Activated CD4-positive, alpha-beta T cell treated with anti-CD3 and anti-CD28 coated beads for 36 hours (primary cell): ENCODE measurements at regions of chr6 and their contacts with region 1.

Region 1: DNA sequence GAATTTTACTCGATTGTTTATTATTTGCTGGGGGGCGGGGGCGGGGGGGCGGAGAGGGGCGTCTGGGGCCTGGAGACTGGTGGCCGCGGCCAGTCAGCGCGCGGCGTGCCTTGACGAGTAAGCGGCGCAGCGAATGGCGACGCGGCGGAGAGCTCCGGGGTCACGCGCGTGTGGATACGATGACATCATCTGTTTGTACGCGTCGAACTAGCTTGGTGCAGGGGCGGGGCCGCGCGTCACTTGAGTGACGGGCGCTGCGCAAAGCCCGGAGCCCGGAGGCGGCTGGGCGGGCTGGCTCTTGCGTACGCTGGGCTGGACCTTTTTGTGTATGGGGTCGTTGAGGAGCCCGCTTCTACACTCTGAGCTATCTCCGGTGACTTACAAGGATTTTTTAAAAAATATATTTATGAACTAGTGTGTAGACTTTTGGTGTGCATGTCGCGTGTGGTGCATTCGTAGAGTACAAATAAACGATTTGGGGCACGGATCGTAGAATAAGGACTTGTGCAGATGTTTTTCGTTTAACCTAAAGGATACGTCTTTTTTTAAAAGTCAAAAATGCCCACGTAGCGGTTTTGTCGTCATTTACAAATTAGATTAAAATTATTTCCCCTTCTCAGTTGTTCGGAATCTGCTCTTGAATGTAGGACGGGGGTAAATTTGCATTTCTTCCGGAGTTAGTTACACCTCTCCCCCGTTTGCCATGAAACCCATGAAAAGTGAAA is 2.2 kb upstream of the FOXO3 start:
- DNase-seq: peak; percentile 98
- ATAC-seq: peak; percentile 71
- H3K4me3 Mint-ChIP-seq: peak overlapping the region; percentile 83
- H3K27ac Mint-ChIP-seq: peak overlapping the region; percentile 89
- H3K4me1 Mint-ChIP-seq: peaks cover 21% of the 10 kb centered on the region
- H3K27me3 Mint-ChIP-seq: peaks cover 14% of the 10 kb centered on the region

Region 2: GRCh38 chr6:107820338-107821261 is 737.9 kb before region 1 on chr6:
- CTCF ChIA-PET with region 1: no interaction called
- POLR2A ChIA-PET with region 1: no interaction called
- intact Hi-C with region 1: loop called in 1 of 2 experiments (anchors 5 kb)
- DNase-seq: peak; percentile 60
- ATAC-seq: no peak
- H3K4me3 Mint-ChIP-seq: peak overlapping the region; percentile 87
- H3K27ac Mint-ChIP-seq: peak overlapping the region; percentile 98
- H3K4me1 Mint-ChIP-seq: peaks cover 84% of the 10 kb centered on the region
- H3K27me3 Mint-ChIP-seq: no peaks in the 10 kb centered on the region

Region 3: GRCh38 chr6:108268845-108269244 is 289.7 kb before region 1 on chr6:
- CTCF ChIA-PET with region 1: no interaction called
- POLR2A ChIA-PET with region 1: no interaction called
- intact Hi-C with region 1: no loop called
- DNase-seq: no peak
- ATAC-seq: no peak
- H3K4me3 Mint-ChIP-seq: no peak overlapping the region
- H3K27ac Mint-ChIP-seq: no peak overlapping the region
- H3K4me1 Mint-ChIP-seq: no peaks in the 10 kb centered on the region
- H3K27me3 Mint-ChIP-seq: no peaks in the 10 kb centered on the region

Region 4: DNA sequence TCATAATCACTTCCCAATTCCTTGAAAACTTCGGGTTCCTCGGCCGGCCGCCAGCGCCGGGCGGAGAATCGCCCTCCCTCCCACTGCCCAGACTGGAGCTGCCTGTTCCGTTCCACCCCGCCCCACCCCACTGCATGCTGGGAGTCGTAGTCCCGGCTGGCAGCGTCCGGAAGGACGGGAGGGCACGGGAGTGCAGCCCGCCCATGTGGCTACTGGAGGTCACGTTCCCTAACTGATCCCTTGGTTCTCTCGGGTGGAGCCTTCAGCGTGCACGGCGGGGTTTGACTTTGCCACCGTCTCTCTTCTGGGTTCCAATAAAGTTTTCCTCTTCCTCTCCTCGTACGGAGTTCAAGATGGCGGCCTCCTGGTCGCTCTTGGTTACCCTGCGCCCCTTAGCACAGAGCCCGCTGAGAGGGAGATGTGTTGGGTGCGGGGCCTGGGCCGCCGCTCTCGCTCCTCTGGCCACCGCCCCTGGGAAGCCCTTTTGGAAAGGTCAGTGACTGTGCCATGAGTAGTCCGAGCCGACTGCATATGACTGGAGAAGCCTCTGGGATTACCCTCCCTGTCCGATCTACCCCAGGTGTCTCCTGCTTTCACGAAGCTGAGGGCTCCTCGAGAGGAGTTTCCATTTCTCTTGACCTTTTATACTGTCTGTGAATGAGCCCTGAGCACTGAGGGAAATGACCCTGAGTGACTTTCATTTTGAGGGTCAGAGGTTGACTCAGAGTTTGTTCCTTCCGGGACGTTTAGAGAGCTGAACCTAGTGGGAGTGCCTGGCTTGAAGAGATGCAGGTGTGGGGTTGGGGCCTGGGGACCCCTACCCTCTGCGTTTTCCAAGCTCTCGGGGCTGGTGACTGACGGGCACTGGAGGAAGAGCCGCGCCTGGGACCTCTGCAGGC is 263.6 kb before region 1 on chr6 and contains the start of gene AFG1L:
- CTCF ChIA-PET with region 1: no interaction called
- POLR2A ChIA-PET with region 1: no interaction called
- intact Hi-C with region 1: loop called in 1 of 2 experiments (anchors 1 kb)
- DNase-seq: peak; percentile 93
- ATAC-seq: peak; percentile 92
- H3K4me3 Mint-ChIP-seq: peak within 1 kb of the TSS; percentile 99
- H3K27ac Mint-ChIP-seq: peak within 1 kb of the TSS; percentile 100
- H3K4me1 Mint-ChIP-seq: peaks cover 13% of the 10 kb centered on the region
- H3K27me3 Mint-ChIP-seq: no peaks in the 10 kb centered on the region
- total RNA-seq, gene AFG1L: 6.6 TPM

Region 5: GRCh38 chr6:108359901-108360882 is 198.3 kb before region 1 on chr6:
- CTCF ChIA-PET with region 1: no interaction called
- POLR2A ChIA-PET with region 1: no interaction called
- intact Hi-C with region 1: no loop called
- DNase-seq: no peak
- ATAC-seq: no peak
- H3K4me3 Mint-ChIP-seq: no peak overlapping the region
- H3K27ac Mint-ChIP-seq: no peak overlapping the region
- H3K4me1 Mint-ChIP-seq: no peaks in the 10 kb centered on the region
- H3K27me3 Mint-ChIP-seq: no peaks in the 10 kb centered on the region

Region 6: DNA sequence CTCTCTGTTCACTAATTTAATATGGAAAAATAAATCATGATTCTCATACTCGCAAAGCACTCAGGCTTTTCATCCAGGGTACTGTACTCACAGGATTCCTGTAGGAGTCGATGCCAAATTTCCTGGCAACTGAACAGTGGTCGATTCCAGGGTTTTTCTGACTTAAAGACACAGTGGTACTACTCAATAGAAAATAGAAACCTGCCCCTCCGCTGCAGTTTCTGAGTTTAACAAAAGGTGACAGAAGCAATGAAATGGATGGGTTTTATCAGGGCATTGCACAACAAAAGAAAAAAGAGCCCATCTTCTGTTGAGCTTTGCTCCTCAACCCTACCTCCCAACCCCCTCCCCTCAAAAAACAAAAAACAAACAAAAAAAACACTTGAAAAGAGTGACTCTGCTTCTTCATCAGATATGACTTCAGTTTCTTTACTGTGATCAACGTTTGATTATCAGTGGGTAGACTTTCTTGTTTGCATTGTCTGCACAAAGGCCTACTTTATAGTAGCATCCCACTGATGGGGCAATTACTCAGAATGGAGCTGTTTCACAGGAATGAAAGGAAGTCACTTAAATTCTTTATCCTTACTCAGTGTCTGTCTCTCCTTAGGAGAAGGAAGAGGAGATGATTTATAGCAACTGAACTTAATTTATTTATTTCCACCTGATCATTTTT is 94.0 kb before region 1 on chr6:
- CTCF ChIA-PET with region 1: no interaction called
- POLR2A ChIA-PET with region 1: no interaction called
- intact Hi-C with region 1: no loop called
- DNase-seq: no peak
- ATAC-seq: no peak
- H3K4me3 Mint-ChIP-seq: no peak overlapping the region
- H3K27ac Mint-ChIP-seq: no peak overlapping the region
- H3K4me1 Mint-ChIP-seq: no peaks in the 10 kb centered on the region
- H3K27me3 Mint-ChIP-seq: peaks cover 16% of the 10 kb centered on the region

Region 7: GRCh38 chr6:108667993-108668392 is 109.5 kb after region 1 on chr6:
- CTCF ChIA-PET with region 1: no interaction called
- POLR2A ChIA-PET with region 1: no interaction called
- intact Hi-C with region 1: loop called in 1 of 2 experiments (anchors 5 kb)
- DNase-seq: no peak
- ATAC-seq: no peak
- H3K4me3 Mint-ChIP-seq: no peak overlapping the region
- H3K27ac Mint-ChIP-seq: no peak overlapping the region
- H3K4me1 Mint-ChIP-seq: peaks cover 45% of the 10 kb centered on the region
- H3K27me3 Mint-ChIP-seq: no peaks in the 10 kb centered on the region

Region 8: DNA sequence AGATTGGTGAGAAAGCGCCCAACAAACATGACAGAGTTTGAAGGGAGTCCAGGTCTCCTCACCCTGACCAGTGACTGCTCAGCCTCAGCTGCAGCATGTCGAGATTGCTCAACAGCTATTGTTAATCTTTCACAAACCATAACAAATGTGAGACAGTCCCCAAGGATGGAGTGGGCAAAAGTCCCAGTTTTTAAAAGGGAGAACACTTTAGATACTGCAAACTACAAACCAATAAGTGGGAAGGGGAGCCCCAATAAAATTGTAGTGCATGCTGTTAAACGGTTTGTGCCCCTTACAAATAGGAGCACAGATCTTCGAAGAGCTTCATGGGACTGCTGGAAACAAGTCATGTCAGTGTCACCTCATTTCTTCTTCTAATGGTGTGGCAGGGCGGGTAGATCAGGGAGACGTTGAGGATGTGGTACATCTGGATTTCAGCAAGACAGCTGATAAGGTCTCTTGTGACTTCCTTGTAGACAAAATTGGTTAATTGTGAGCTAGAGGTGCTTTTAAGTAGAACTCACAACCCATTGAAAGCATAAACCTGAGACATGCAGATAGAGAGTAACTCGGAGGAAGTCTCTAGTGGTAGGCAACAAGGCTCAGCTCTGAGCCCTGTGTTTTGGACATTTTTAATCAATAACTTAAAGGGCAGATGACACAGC is 155.7 kb after region 1 on chr6:
- CTCF ChIA-PET with region 1: no interaction called
- POLR2A ChIA-PET with region 1: no interaction called
- intact Hi-C with region 1: no loop called
- DNase-seq: no peak
- ATAC-seq: no peak
- H3K4me3 Mint-ChIP-seq: no peak overlapping the region
- H3K27ac Mint-ChIP-seq: no peak overlapping the region
- H3K4me1 Mint-ChIP-seq: peaks cover 10% of the 10 kb centered on the region
- H3K27me3 Mint-ChIP-seq: no peaks in the 10 kb centered on the region

Region 9: DNA sequence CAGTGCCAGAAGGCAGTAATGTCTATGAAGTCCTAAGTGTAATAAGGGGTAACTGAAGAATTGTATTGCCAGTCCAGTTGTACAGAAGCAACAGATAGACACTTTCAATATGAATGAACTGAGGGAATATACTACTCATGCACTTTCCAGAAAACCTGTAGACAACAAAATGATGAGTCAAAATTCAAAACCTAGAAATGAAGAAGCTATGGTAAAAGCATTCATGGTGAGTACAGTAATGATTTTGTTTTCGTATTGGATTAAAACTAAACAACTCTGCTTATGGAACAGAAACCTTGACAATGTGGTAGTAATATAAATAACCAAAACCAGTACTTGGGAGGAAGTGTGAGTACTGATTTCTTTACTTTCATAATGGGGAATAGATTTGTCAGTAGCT is 324.6 kb after region 1 on chr6:
- CTCF ChIA-PET with region 1: no interaction called
- POLR2A ChIA-PET with region 1: interaction called, 3 read pairs
- intact Hi-C with region 1: loop called in 1 of 2 experiments (anchors 1 kb)
- DNase-seq: no peak
- ATAC-seq: peak; percentile 93
- H3K4me3 Mint-ChIP-seq: no peak overlapping the region
- H3K27ac Mint-ChIP-seq: peak overlapping the region; percentile 60
- H3K4me1 Mint-ChIP-seq: peaks cover 34% of the 10 kb centered on the region
- H3K27me3 Mint-ChIP-seq: peaks cover 16% of the 10 kb centered on the region

Region 10: GRCh38 chr6:109308018-109308492 is 749.5 kb after region 1 on chr6:
- CTCF ChIA-PET with region 1: no interaction called
- POLR2A ChIA-PET with region 1: no interaction called
- intact Hi-C with region 1: loop called in 1 of 2 experiments (anchors 10 kb)
- DNase-seq: peak; percentile 75
- ATAC-seq: peak; percentile 91
- H3K4me3 Mint-ChIP-seq: no peak overlapping the region
- H3K27ac Mint-ChIP-seq: peak overlapping the region; percentile 76
- H3K4me1 Mint-ChIP-seq: peaks cover 35% of the 10 kb centered on the region
- H3K27me3 Mint-ChIP-seq: no peaks in the 10 kb centered on the region

Region 11: DNA sequence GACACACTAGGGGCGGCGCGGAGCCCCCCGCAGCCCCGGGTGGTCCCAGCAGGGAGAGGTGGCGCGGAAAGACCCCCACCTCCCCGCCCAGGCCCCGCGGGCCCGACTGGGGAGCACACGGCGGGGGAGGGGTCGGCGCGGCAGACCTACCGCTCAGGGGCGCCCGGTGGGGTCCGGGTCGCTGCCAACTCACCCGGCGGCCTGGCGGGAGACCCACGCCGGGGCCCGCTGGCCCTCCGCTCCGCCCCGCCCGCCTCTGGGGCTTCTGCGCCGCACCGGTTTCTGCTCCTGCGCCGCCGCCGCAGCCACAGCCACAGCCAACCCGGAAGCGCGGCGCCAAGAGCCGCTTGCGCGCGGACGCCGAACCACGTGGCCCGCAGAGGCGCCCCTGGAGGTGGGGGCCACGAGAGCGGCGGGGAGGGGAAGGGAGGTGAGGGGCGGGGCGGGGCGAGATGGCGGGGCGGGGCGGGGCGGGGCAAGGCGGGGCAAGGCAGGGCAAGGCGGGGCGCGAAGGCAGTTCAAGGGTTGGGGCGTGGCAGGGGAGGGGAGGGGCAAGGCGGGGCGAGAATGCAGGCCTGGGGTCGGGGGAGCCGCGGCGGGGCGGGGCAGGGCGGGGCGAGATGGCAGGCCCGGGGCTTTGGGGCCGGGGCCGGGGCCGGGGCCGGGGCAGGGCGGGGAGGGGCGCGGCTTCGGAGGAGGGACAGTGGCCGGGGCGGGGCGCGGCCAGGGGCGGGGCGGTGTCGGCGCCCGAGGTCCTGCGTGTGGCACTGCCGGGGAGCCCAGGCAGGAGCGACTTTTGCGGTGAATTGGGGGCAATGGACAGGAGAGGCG is 924.6 kb after region 1 on chr6 and contains the start of gene ZBTB24:
- CTCF ChIA-PET with region 1: no interaction called
- POLR2A ChIA-PET with region 1: interaction called, 3 read pairs
- intact Hi-C with region 1: loop called in 1 of 2 experiments (anchors 1 kb)
- DNase-seq: peak; percentile 94
- ATAC-seq: peak; percentile 84
- H3K4me3 Mint-ChIP-seq: peak within 1 kb of the TSS; percentile 96
- H3K27ac Mint-ChIP-seq: peak within 1 kb of the TSS; percentile 94
- H3K4me1 Mint-ChIP-seq: peaks cover 43% of the 10 kb centered on the region
- H3K27me3 Mint-ChIP-seq: no peaks in the 10 kb centered on the region
- total RNA-seq, gene ZBTB24: 12.0 to 14.7 TPM